Left ventricle myocardium inferior (tissue), 1 donor: ENCODE measurements at regions of chr10 and their contacts with region 1.

Region 1: DNA sequence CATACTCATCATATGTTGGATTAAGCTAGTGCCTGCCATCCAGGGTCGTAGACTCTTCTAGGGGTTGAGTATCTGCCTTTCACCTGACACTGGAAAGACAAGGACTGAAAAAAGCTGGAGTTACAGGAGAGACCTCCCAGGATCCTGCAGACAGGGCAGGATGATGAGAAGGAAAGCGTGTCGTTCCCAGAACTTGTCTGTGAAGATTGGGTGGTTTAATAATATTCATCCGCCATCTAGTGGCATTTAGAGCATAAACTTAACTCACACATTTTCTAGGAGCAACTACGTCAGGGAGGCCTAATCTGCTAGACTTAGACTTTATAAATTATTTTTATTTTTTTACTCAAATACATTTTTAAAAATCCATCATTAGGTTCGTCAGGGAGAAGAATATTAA is 59.6 kb downstream of the ADRB1 start:
- DNase-seq: no peak
- H3K4me3 ChIP-seq: no peak overlapping the region
- H3K27ac ChIP-seq: no peak overlapping the region
- H3K4me1 ChIP-seq: peaks cover 21% of the 10 kb centered on the region
- H3K27me3 ChIP-seq: no peaks in the 10 kb centered on the region
- CTCF ChIP-seq: peak; percentile 72

Region 2: GRCh38 chr10:113704637-113705343 is 398.5 kb before region 1 on chr10:
- intact Hi-C with region 1: loop called (anchors 10 kb)
- DNase-seq: no peak
- H3K4me3 ChIP-seq: no peak overlapping the region
- H3K27ac ChIP-seq: no peak overlapping the region
- H3K4me1 ChIP-seq: peaks cover 38% of the 10 kb centered on the region
- H3K27me3 ChIP-seq: no peaks in the 10 kb centered on the region
- CTCF ChIP-seq: peak; percentile 68

Region 3: GRCh38 chr10:113802997-113803396 is 300.3 kb before region 1 on chr10:
- intact Hi-C with region 1: loop called (anchors 2 kb)
- DNase-seq: no peak
- H3K4me3 ChIP-seq: no peak overlapping the region
- H3K27ac ChIP-seq: no peak overlapping the region
- H3K4me1 ChIP-seq: no peaks in the 10 kb centered on the region
- H3K27me3 ChIP-seq: peaks cover 6% of the 10 kb centered on the region
- CTCF ChIP-seq: no peak